Lower lobe of right lung (tissue), 2 donors: ENCODE measurements at regions of chr16 and their contacts with region 1.

Region 1: GRCh38 chr16:72832621-72833248 is 215.2 kb downstream of the ZFHX3 start:
- DNase-seq: peak; percentile 82
- ATAC-seq: peak; percentile 92 to 93
- H3K4me3 ChIP-seq: no peak overlapping the region
- H3K27ac ChIP-seq: no peak overlapping the region
- H3K4me1 ChIP-seq: no peaks in the 10 kb centered on the region
- H3K27me3 ChIP-seq: no peaks in the 10 kb centered on the region
- CTCF ChIP-seq: peak; percentile 97

Region 2: GRCh38 chr16:73196670-73197069 is 363.9 kb after region 1 on chr16:
- intact Hi-C with region 1: loop called (anchors 5 kb)
- DNase-seq: peak; percentile 73
- ATAC-seq: peak; percentile 95 to 97
- H3K4me3 ChIP-seq: no peak overlapping the region
- H3K27ac ChIP-seq: no peak overlapping the region
- H3K4me1 ChIP-seq: no peaks in the 10 kb centered on the region
- H3K27me3 ChIP-seq: no peaks in the 10 kb centered on the region
- CTCF ChIP-seq: peak; percentile 74